Activated CD8-positive, alpha-beta T cell treated with anti-CD3 and anti-CD28 coated beads for 36 hours (primary cell): ENCODE measurements at regions of chr2 and their contacts with region 1.

Region 1: GRCh38 chr2:136238286-136239078 is 120.5 kb upstream of the CXCR4 start:
- DNase-seq: peak; percentile 48
- ATAC-seq: peak; percentile 77
- H3K4me3 Mint-ChIP-seq: peak overlapping the region; percentile 4
- H3K27ac Mint-ChIP-seq: peak overlapping the region; percentile 88
- H3K4me1 Mint-ChIP-seq: peaks cover 54% of the 10 kb centered on the region
- H3K27me3 Mint-ChIP-seq: no peaks in the 10 kb centered on the region
- CTCF ChIP-seq: no peak

Region 2: GRCh38 chr2:136297994-136298393 is 59.5 kb after region 1 on chr2:
- CTCF ChIA-PET with region 1: no interaction called
- POLR2A ChIA-PET with region 1: no interaction called
- intact Hi-C with region 1: no loop called
- DNase-seq: no peak
- ATAC-seq: no peak
- H3K4me3 Mint-ChIP-seq: no peak overlapping the region
- H3K27ac Mint-ChIP-seq: no peak overlapping the region
- H3K4me1 Mint-ChIP-seq: peaks cover 6% of the 10 kb centered on the region
- H3K27me3 Mint-ChIP-seq: no peaks in the 10 kb centered on the region
- CTCF ChIP-seq: no peak

Region 3: GRCh38 chr2:136327162-136327852 is 88.8 kb after region 1 on chr2:
- CTCF ChIA-PET with region 1: no interaction called
- POLR2A ChIA-PET with region 1: no interaction called
- intact Hi-C with region 1: loop called (anchors 10 kb)
- DNase-seq: peak; percentile 88
- ATAC-seq: peak; percentile 95
- H3K4me3 Mint-ChIP-seq: peak overlapping the region; percentile 44
- H3K27ac Mint-ChIP-seq: peak overlapping the region; percentile 83
- H3K4me1 Mint-ChIP-seq: peaks cover 58% of the 10 kb centered on the region
- H3K27me3 Mint-ChIP-seq: no peaks in the 10 kb centered on the region
- CTCF ChIP-seq: no peak